Gastrocnemius medialis (tissue), 4 donors: ENCODE measurements at regions of chr2 and their contacts with region 1.

Region 1: DNA sequence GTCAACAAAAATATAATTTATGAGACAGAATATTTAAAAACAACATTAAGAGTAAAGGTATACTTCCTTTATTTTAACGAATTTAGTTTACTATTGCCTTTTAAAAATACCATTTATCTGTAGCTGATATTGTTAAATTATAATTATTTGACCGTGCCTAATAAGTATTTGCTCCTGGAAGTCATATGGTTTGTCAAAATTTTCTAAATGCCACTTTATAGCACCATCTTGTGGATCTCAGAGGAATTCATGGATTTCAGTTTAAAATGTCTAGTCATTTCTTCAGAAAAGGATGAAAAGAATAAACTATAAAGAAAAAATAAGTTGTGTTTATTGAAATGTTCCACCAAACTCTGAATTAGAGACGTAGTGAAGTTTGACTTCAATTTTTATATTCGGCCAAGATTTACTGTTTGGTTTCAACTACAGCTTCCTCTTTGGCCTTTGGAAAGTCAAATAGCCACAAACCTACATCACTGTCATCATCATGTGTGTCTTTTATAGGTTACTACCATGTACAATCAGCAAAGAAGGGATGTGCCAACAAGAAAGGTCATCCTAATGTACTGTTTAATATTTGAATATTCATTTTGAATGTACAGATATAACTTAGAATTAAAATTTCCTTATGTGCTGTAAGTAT is 10.3 kb upstream of the FTCDNL1 start:
- DNase-seq: no peak
- ATAC-seq: peak in 1 of 2 donors; percentile 14
- H3K4me3 ChIP-seq: no peak overlapping the region
- H3K27ac ChIP-seq: no peak overlapping the region
- H3K4me1 ChIP-seq: peaks cover 4 to 5% of the 10 kb centered on the region in 2 donors
- H3K27me3 ChIP-seq: no peaks in the 10 kb centered on the region
- CTCF ChIP-seq: peak in 3 of 5 experiments; percentile 39 to 42 (median 42)
- POLR2A ChIP-seq: no peak

Region 2: GRCh38 chr2:199704358-199705238 is 156.7 kb before region 1 on chr2:
- in situ Hi-C with region 1: no loop called
- intact Hi-C with region 1: loop called (anchors 10 kb)
- DNase-seq: no peak
- ATAC-seq: peak; percentile 63 to 69
- H3K4me3 ChIP-seq: no peak overlapping the region
- H3K27ac ChIP-seq: no peak overlapping the region
- H3K4me1 ChIP-seq: no peaks in the 10 kb centered on the region
- H3K27me3 ChIP-seq: no peaks in the 10 kb centered on the region
- CTCF ChIP-seq: peak; percentile 16 to 59 (median 39)
- POLR2A ChIP-seq: no peak

Region 3: DNA sequence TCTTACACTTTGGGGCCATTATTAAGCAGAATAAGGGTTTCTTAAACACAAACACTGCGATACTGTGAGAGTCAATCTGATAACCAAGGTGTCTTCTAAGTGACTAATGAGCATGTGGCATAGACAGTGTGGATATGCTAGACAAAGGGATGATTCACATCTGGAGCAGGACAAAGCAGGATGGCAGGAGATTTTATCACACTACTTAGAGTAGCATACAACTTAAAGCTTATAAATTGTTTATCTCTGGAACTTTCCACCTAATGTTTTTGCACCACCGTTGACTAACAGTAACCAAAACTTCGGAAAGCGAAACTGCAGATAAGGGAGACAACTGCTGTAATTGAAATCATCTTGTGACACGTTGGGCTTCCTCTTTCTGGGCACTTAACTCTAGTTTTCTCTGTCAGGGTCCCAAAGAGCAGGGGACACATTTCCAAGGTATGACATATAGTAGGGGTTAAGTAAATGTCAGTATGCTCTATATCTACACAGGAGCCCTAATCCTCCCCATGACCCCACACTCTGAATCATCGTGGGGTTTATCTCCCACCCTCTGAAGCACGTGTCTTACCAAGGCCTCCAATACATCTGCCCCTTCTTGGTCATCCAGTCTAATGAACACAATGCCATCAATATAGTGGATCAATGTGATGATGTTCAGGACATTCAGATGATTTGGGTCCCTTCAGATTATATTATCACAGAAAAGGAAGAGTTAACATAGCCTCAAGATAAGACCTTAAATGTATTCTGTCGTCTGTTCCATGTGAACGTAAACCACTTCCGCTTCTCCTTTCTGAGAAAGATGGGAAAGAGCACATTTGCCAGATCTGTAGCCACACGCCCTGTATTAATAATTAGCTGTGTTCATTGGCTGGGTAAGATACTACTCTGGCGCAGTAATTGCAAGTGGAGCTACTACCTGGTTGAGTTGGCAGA is 88.9 kb before region 1 on chr2:
- in situ Hi-C with region 1: no loop called
- intact Hi-C with region 1: no loop called
- DNase-seq: no peak
- ATAC-seq: no peak
- H3K4me3 ChIP-seq: no peak overlapping the region
- H3K27ac ChIP-seq: no peak overlapping the region
- H3K4me1 ChIP-seq: no peaks in the 10 kb centered on the region
- H3K27me3 ChIP-seq: no peaks in the 10 kb centered on the region
- CTCF ChIP-seq: no peak
- POLR2A ChIP-seq: no peak